Activated CD4-positive, alpha-beta memory T cell treated with anti-CD3 and anti-CD28 coated beads for 36 hours (primary cell): ENCODE measurements at regions of chr10 and their contacts with region 1.

Region 1: DNA sequence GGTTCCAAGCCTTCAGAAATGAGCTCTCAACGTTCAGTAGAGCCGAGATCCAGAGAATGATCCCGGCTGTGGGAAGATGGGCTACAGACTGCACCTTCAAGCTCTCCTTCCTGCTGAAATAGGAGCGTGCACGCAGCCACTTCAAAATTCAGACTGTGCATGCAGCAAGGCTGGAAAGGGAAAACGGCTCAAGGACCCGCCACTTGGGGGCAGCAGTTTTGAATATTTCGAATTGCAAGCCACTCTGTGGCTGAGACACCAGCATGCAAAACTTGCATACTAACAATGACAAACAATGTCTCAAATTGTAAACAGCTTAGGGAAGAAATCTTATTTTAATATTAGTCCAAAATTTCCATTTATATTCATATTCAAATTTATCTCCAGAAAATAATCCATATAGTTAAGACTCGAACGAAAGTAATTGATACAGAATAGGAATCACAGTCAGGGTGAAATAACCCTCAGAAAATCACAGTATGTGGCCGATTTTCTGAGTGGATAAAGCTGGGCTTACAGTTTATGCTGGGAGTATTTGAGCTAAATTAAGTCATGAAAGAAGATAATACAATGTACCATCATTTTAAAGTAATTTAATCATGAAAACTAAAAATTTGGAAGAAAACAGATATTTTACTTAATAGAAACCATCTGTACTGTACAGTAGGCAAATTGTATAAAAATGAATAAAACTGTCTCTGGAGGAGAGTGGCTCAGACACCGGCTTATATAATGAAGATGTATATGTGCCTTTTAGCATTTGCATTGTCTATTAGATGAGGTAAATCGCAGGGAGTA is 137.9 kb upstream of the MKI67 start:
- DNase-seq: peak; percentile 68
- H3K4me3 Mint-ChIP-seq: no peak overlapping the region
- H3K27ac Mint-ChIP-seq: no peak overlapping the region
- H3K4me1 Mint-ChIP-seq: no peaks in the 10 kb centered on the region
- H3K27me3 Mint-ChIP-seq: peaks cover 24% of the 10 kb centered on the region

Region 2: GRCh38 chr10:128859738-128860386 is 595.8 kb after region 1 on chr10:
- CTCF ChIA-PET with region 1: no interaction called
- POLR2A ChIA-PET with region 1: no interaction called
- intact Hi-C with region 1: loop called (anchors 2 kb)
- DNase-seq: peak; percentile 37
- H3K4me3 Mint-ChIP-seq: no peak overlapping the region
- H3K27ac Mint-ChIP-seq: no peak overlapping the region
- H3K4me1 Mint-ChIP-seq: no peaks in the 10 kb centered on the region
- H3K27me3 Mint-ChIP-seq: no peaks in the 10 kb centered on the region